HepG2 (cell line): ENCODE measurements at regions of chr14 and their contacts with region 1.

Region 1: DNA sequence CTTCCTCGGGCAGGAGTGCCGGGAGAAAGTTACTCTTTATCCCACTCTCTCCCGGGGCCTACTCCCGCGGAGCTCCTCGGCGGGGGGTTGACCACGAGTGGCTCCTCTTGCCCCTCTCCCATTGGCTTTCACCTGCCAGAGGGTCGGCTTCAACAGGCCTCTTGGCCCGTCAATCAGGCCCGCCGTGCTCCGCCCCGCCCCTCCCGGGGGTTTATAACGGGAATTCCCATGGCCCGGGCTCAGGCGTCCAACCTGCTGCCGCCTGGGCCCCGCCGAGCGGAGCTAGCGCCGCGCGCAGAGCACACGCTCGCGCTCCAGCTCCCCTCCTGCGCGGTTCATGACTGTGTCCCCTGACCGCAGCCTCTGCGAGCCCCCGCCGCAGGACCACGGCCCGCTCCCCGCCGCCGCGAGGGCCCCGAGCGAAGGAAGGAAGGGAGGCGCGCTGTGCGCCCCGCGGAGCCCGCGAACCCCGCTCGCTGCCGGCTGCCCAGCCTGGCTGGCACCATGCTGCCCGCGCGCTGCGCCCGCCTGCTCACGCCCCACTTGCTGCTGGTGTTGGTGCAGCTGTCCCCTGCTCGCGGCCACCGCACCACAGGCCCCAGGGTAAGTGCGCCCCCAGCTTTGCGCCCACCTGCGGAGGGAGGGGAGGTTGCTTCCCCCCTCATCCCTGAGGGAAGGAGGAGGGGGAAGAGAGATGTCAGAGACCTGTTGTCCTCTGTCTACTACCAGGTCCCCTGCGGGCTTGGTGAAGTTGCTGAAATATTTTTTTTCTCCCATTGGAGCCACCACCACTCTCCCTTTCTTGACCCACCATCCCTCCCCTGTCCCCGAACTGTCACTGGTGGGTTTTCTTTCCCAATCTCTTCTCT is at the start of gene SMOC1:
- DNase-seq: peak; percentile 84
- ATAC-seq: peak; percentile 91
- H3K4me3 ChIP-seq: peak within 1 kb of the TSS; percentile 76 to 91 (median 90)
- H3K27ac ChIP-seq: peak within 1 kb of the TSS; percentile 71
- H3K4me1 ChIP-seq: peaks cover 68% of the 10 kb centered on the region
- H3K27me3 ChIP-seq: no peaks in the 10 kb centered on the region; a peak in 1 of 5 replicates
- CTCF ChIP-seq: peak; percentile 14
- EP300 ChIP-seq: 0 out of 4 replicates have a peak, but pooled peaks of 1 of the 2 experiments have one; percentile 12
- POLR2A ChIP-seq: peak; percentile 97 to 98
- RAD21 ChIP-seq: peak; percentile 65
- total RNA-seq, gene SMOC1: 7.3 and 17.8 TPM in 2 replicates

Region 2: GRCh38 chr14:69818757-69819191 is 60.6 kb before region 1 on chr14:
- CTCF ChIA-PET with region 1: no interaction called
- POLR2A ChIA-PET with region 1: interaction called, 4 read pairs
- in situ Hi-C with region 1: no loop called
- intact Hi-C with region 1: loop called (anchors 10 kb)
- DNase-seq: peak; percentile 68
- ATAC-seq: peak; percentile 94
- H3K4me3 ChIP-seq: no peak overlapping the region
- H3K27ac ChIP-seq: no peak overlapping the region
- H3K4me1 ChIP-seq: peaks cover 12% of the 10 kb centered on the region
- H3K27me3 ChIP-seq: no peaks in the 10 kb centered on the region; a peak in 1 of 5 replicates
- CTCF ChIP-seq: peak; percentile 88
- EP300 ChIP-seq: no peak
- POLR2A ChIP-seq: no peak
- RAD21 ChIP-seq: peak; percentile 96

Region 3: GRCh38 chr14:69850086-69850735 is 29.2 kb before region 1 on chr14:
- CTCF ChIA-PET with region 1: no interaction called
- POLR2A ChIA-PET with region 1: interaction called, 35 read pairs
- in situ Hi-C with region 1: no loop called
- intact Hi-C with region 1: loop called (anchors 2 kb)
- DNase-seq: peak; percentile 86
- ATAC-seq: peak; percentile 85
- H3K4me3 ChIP-seq: peak overlapping the region; percentile 60 to 73 (median 71)
- H3K27ac ChIP-seq: peak overlapping the region; percentile 99
- H3K4me1 ChIP-seq: peaks cover 96% of the 10 kb centered on the region
- H3K27me3 ChIP-seq: no peaks in the 10 kb centered on the region
- CTCF ChIP-seq: peak; percentile 46
- EP300 ChIP-seq: peak in 1 of 2 experiments; percentile 73; a peak in 2 of 4 replicates
- POLR2A ChIP-seq: peak; percentile 72 to 89
- RAD21 ChIP-seq: peak; percentile 50

Region 4: GRCh38 chr14:69863083-69863482 is 16.3 kb before region 1 on chr14:
- CTCF ChIA-PET with region 1: no interaction called
- POLR2A ChIA-PET with region 1: interaction called, 11 read pairs
- in situ Hi-C with region 1: no loop called
- intact Hi-C with region 1: no loop called
- DNase-seq: peak; percentile 52
- ATAC-seq: peak; percentile 83
- H3K4me3 ChIP-seq: no peak overlapping the region
- H3K27ac ChIP-seq: no peak overlapping the region
- H3K4me1 ChIP-seq: peaks cover 37% of the 10 kb centered on the region
- H3K27me3 ChIP-seq: peaks cover 2 to 22% of the 10 kb centered on the region in 2 experiments; a peak in 2 of 5 replicates
- CTCF ChIP-seq: peak; percentile 79
- EP300 ChIP-seq: no peak
- POLR2A ChIP-seq: no peak
- RAD21 ChIP-seq: peak; percentile 78

Region 5: GRCh38 chr14:69896080-69896479 is 16.7 kb after region 1 on chr14:
- CTCF ChIA-PET with region 1: no interaction called
- POLR2A ChIA-PET with region 1: interaction called, 21 read pairs
- in situ Hi-C with region 1: no loop called
- intact Hi-C with region 1: no loop called
- DNase-seq: no peak
- ATAC-seq: no peak
- H3K4me3 ChIP-seq: no peak overlapping the region
- H3K27ac ChIP-seq: no peak overlapping the region
- H3K4me1 ChIP-seq: peaks cover 19% of the 10 kb centered on the region
- H3K27me3 ChIP-seq: no peaks in the 10 kb centered on the region
- CTCF ChIP-seq: no peak
- EP300 ChIP-seq: no peak
- POLR2A ChIP-seq: no peak
- RAD21 ChIP-seq: no peak

Region 6: GRCh38 chr14:69937367-69938081 is 58.1 kb after region 1 on chr14:
- CTCF ChIA-PET with region 1: no interaction called
- POLR2A ChIA-PET with region 1: interaction called, 15 read pairs
- in situ Hi-C with region 1: no loop called
- intact Hi-C with region 1: loop called (anchors 2 kb)
- DNase-seq: peak; percentile 71
- ATAC-seq: peak; percentile 88
- H3K4me3 ChIP-seq: peak overlapping the region in 2 of 3 experiments; percentile 4 to 44; a peak in 2 of 6 replicates
- H3K27ac ChIP-seq: peak overlapping the region; percentile 55
- H3K4me1 ChIP-seq: peaks cover 74% of the 10 kb centered on the region
- H3K27me3 ChIP-seq: no peaks in the 10 kb centered on the region
- CTCF ChIP-seq: peak; percentile 65
- EP300 ChIP-seq: 0 out of 4 replicates have a peak, but pooled peaks of 1 of the 2 experiments have one; percentile 19
- POLR2A ChIP-seq: no peak
- RAD21 ChIP-seq: 0 out of 2 replicates have a peak, but pooled peaks have one; percentile 30

Region 7: DNA sequence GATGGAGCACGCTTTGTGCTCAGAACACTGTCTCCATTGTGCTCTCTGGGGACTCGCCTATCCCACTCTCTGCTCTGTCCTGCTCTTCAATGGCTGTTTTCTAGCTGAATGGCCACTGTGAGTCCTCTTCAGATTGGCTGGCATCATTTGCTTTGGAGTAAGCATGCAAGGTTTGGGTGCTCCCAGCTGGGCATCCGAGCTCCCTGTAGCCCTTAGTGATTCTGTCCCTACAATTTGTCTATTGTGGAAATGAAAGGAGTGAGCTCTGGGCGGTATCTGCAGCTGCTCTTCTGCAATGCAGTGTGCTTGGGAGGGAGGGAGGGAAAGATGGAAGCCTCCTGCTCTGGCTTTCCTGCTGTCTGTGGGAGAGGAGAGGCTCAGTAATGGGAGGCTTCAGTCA is 84.6 kb after region 1 on chr14:
- CTCF ChIA-PET with region 1: no interaction called
- POLR2A ChIA-PET with region 1: no interaction called
- in situ Hi-C with region 1: no loop called
- intact Hi-C with region 1: no loop called
- DNase-seq: no peak
- ATAC-seq: no peak
- H3K4me3 ChIP-seq: no peak overlapping the region
- H3K27ac ChIP-seq: no peak overlapping the region
- H3K4me1 ChIP-seq: no peaks in the 10 kb centered on the region
- H3K27me3 ChIP-seq: no peaks in the 10 kb centered on the region
- CTCF ChIP-seq: no peak
- EP300 ChIP-seq: no peak
- POLR2A ChIP-seq: no peak
- RAD21 ChIP-seq: no peak

Region 8: GRCh38 chr14:70013269-70013873 is 134.0 kb after region 1 on chr14:
- CTCF ChIA-PET with region 1: no interaction called
- POLR2A ChIA-PET with region 1: interaction called, 7 read pairs
- in situ Hi-C with region 1: no loop called
- intact Hi-C with region 1: loop called (anchors 2 kb)
- DNase-seq: peak; percentile 41
- ATAC-seq: peak; percentile 83
- H3K4me3 ChIP-seq: no peak overlapping the region
- H3K27ac ChIP-seq: no peak overlapping the region
- H3K4me1 ChIP-seq: peaks cover 9% of the 10 kb centered on the region; the same call in 1 of the 2 replicates
- H3K27me3 ChIP-seq: no peaks in the 10 kb centered on the region
- CTCF ChIP-seq: peak; percentile 83
- EP300 ChIP-seq: no peak
- POLR2A ChIP-seq: no peak
- RAD21 ChIP-seq: peak; percentile 86